Activated T-helper 2 cell treated with anti-CD3 and anti-CD28 coated beads, Interferon-gamma antibody, Interleukin-2, Interleukin-4, amounts not matched to agents 10 μg/mL and 5 μg/mL and 100 μg/mL, durations not matched to agents 14 hours and 24 hours and 36 hours (primary cell): ENCODE measurements at regions of chr4 and their contacts with region 1.

Region 1: GRCh38 chr4:37762294-37762990 is 64.0 kb upstream of the PGM2 start:
- DNase-seq: no peak
- H3K4me3 Mint-ChIP-seq: no peak overlapping the region
- H3K27ac Mint-ChIP-seq: no peak overlapping the region
- H3K4me1 Mint-ChIP-seq: peaks cover 14% of the 10 kb centered on the region
- H3K27me3 Mint-ChIP-seq: peaks cover under 1% of the 10 kb centered on the region

Region 2: DNA sequence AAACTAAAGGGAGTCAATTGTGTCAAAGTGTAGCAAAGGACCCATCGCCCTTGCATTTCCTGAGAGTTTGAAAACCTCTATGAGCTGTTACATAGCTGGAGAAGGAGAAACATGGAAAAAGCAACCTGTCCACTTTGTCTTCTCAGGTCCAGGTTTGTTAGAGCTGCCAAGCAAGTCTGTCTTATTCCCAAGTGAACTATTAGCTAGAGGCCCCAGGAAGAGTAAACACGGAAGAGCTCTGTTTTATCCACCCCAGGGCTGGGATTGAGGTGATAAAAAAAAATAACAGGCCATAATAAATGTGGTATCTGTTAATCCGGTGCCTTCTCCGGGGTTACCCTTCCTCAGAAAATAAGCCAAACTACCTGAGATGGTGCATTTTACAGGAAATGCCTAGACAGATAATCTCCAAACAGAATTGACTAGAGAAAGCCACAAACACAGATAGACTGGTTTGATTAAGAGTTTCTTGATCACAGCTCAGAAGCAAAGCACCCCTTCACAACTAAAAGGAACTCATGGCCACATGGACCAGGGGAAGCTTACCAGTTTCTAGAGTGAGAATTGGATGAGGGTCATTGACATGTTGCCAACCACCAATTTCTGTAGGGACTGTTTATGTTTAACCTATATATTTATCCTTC is 40.3 kb before region 1 on chr4:
- intact Hi-C with region 1: loop called (anchors 5 kb)
- DNase-seq: peak; percentile 20
- H3K4me3 Mint-ChIP-seq: no peak overlapping the region
- H3K27ac Mint-ChIP-seq: no peak overlapping the region
- H3K4me1 Mint-ChIP-seq: peaks cover 33% of the 10 kb centered on the region
- H3K27me3 Mint-ChIP-seq: peaks cover 10% of the 10 kb centered on the region